ENCODE measurements at regions of chr17 and their contacts with region 1.

Region 1: GRCh38 chr17:63571763-63572271 is 21.5 kb downstream of the DCAF7 start:
- DNase-seq: no peak
- H3K4me3 ChIP-seq: no peak overlapping the region
- H3K27ac ChIP-seq: peak overlapping the region in 1 of 2 experiments; percentile 71; a peak in 2 of 4 replicates
- H3K4me1 ChIP-seq: peaks cover 3 to 12% of the 10 kb centered on the region in 2 experiments; a peak in 3 of 4 replicates
- H3K27me3 ChIP-seq: no peaks in the 10 kb centered on the region
- CTCF ChIP-seq: no peak
- EP300 ChIP-seq: no peak
- RAD21 ChIP-seq: no peak

Region 2: DNA sequence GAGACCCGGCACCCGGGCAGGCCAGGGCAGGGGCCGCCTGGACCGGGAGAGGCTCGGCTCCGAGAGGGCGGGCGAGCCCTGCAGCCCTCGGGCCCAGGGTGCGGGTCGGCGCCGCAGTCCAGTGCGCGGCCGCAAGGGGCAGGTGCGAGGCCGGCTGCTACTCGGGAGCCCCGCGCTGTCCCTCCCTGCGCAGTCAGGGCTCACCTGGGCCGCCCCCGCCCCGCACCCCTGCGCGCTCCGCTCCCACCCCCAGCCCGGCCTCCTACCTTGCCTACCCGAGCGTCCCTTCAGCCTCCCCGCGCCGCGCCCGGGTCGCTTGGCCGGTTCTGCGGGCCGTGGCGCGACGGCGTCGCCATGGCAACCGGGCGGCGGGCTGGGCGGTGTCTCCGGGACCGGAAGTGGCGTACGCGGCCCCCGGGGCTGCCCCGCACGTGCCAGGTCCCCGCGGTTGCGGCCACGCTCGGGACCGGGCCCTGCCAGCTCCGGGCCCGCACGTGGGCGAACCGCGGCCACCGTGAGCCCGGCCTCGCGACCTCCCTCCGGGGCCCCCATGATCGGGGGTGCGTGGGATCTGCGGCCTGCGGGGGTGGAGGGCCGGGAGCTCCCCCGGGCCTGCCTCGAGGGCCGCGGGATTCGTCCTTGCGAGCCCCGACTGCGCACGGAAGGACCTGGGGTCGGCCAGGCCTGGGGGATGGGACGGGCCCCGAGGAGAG is 125.7 kb before region 1 on chr17 and contains the start of gene CYB561:
- CTCF ChIA-PET with region 1: interaction called, 15 read pairs
- POLR2A ChIA-PET with region 1: interaction called, 3 read pairs
- DNase-seq: peak; percentile 97
- H3K4me3 ChIP-seq: peak within 1 kb of the TSS; percentile 56 to 64
- H3K27ac ChIP-seq: peak within 1 kb of the TSS; percentile 19 to 99; a peak in 2 of 4 replicates
- H3K4me1 ChIP-seq: peaks cover 8 to 69% of the 10 kb centered on the region in 2 experiments
- H3K27me3 ChIP-seq: no peaks in the 10 kb centered on the region
- CTCF ChIP-seq: peak; percentile 54
- EP300 ChIP-seq: no peak
- RAD21 ChIP-seq: peak; percentile 32
- polyA plus RNA-seq, gene CYB561: 28.3 and 38.6 TPM in 2 replicates

Region 3: DNA sequence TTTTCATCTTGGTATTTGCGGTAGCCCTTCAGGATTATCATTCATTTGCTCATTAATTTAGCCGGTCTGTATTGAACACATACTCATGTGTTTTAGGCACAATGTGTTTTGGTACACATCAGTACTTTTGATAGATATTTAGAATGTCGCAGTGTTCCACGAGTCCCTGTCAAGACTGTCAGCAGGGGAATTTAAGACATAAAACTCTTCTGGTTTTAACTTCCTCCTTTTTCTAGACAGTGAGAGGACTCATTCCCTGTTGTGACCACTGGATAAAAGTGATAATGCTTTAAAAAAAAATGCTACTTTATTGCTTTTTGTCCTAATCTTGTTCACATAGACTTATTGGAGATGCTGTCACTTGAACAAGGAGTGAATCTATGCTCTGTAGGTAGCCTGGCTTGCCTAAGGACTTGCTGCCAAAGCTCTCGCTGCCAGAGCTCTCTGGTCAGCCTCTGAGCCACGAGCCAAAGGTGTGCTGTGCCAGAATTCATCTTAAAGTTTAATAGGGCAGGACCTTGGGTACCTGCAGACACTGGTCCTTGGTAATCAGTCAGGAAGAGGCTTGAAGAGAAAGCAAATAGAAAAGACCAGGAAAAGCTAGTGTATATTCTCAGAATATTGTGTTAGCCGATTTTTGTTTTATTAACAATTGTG is 16.2 kb before region 1 on chr17:
- CTCF ChIA-PET with region 1: interaction called, 13 read pairs
- POLR2A ChIA-PET with region 1: interaction called, 4 read pairs
- DNase-seq: no peak
- H3K4me3 ChIP-seq: no peak overlapping the region
- H3K27ac ChIP-seq: no peak overlapping the region
- H3K4me1 ChIP-seq: peaks cover 9 to 22% of the 10 kb centered on the region in 2 experiments; a peak in 2 of 4 replicates
- H3K27me3 ChIP-seq: no peaks in the 10 kb centered on the region
- CTCF ChIP-seq: no peak
- EP300 ChIP-seq: no peak
- RAD21 ChIP-seq: no peak

Region 4: GRCh38 chr17:63592797-63593472 is 21.1 kb after region 1 on chr17:
- CTCF ChIA-PET with region 1: interaction called, 13 read pairs
- POLR2A ChIA-PET with region 1: no interaction called
- DNase-seq: no peak
- H3K4me3 ChIP-seq: no peak overlapping the region
- H3K27ac ChIP-seq: no peak overlapping the region
- H3K4me1 ChIP-seq: peaks cover 0 to 2% of the 10 kb centered on the region in 2 experiments; a peak in 1 of 4 replicates
- H3K27me3 ChIP-seq: no peaks in the 10 kb centered on the region
- CTCF ChIP-seq: no peak
- EP300 ChIP-seq: no peak
- RAD21 ChIP-seq: no peak